ENCODE measurements at regions of chr7 and their contacts with region 1.

Region 1: GRCh38 chr7:20913853-20914252 is 127.2 kb upstream of the SP8 start:
- DNase-seq: no peak
- ATAC-seq: no peak
- H3K4me3 ChIP-seq: no peak overlapping the region
- H3K27ac ChIP-seq: no peak overlapping the region
- H3K4me1 ChIP-seq: no peaks in the 10 kb centered on the region
- H3K27me3 ChIP-seq: no peaks in the 10 kb centered on the region
- CTCF ChIP-seq: no peak

Region 2: DNA sequence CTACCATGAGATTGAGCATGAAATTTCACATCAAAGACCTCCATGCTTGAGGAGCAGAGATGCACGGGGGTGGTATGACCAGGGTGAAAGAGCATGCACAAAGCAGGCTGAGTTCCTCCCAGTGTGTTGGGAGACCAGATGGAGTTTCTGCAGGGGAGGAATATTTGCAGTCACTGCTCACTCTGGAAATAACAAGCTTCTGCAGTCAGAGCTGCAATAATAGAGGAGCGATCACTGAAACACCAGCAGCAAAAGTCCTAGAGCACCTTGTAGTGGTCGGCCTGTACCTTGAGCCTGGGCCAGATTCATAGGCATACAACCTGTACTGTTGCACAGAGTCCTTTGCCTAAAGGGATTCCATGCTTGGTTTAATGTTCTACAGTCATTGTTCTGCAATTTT is 57.4 kb after region 1 on chr7:
- intact Hi-C with region 1: loop called in 1 of 10 experiments (anchors 10 kb)
- DNase-seq: no peak
- ATAC-seq: no peak
- H3K4me3 ChIP-seq: no peak overlapping the region
- H3K27ac ChIP-seq: no peak overlapping the region
- H3K4me1 ChIP-seq: no peaks in the 10 kb centered on the region
- H3K27me3 ChIP-seq: no peaks in the 10 kb centered on the region
- CTCF ChIP-seq: no peak

Region 3: DNA sequence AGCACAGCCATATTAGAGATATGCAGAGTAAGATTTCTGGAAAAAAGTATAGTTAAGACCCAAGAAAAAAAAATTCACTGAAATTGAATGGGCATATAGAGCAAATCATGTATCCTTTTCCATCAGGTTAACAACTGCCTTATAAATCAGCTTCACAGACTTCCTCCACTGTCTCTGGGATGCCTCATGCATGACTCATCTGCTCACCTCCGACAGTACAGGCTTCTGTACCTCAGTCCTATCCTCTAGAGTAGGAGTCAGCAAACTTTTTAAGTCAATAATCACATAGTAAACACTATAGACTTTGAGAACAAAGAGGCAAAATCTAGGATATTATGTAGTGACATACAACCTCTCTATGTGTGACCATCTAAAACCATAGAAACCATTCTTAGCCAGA is 84.5 kb after region 1 on chr7:
- intact Hi-C with region 1: no loop called
- DNase-seq: no peak
- ATAC-seq: no peak
- H3K4me3 ChIP-seq: no peak overlapping the region
- H3K27ac ChIP-seq: no peak overlapping the region
- H3K4me1 ChIP-seq: no peaks in the 10 kb centered on the region
- H3K27me3 ChIP-seq: no peaks in the 10 kb centered on the region
- CTCF ChIP-seq: no peak